ENCODE measurements at regions of chr21 and their contacts with region 1.

Region 1: GRCh38 chr21:39313571-39314142 is at the start of gene BRWD1:
- DNase-seq: peak; percentile 88 to 92 (median 89)
- ATAC-seq: peak; percentile 53 to 86 (median 76)
- H3K4me3 ChIP-seq: peak within 1 kb of the TSS; percentile 68 to 96 (median 82)
- H3K27ac ChIP-seq: peak within 1 kb of the TSS; percentile 92 to 100 (median 98)
- H3K4me1 ChIP-seq: peaks cover 3 to 42% (median 16%) of the 10 kb centered on the region in 12 donors
- H3K27me3 ChIP-seq: no peaks in the 10 kb centered on the region
- CTCF ChIP-seq: peak; percentile 25 to 70 (median 47)
- POLR2A ChIP-seq: peak in 1 of 2 donors; percentile 51
- total RNA-seq, gene BRWD1: 29.0 to 44.5 (median 33.1) TPM

Region 2: DNA sequence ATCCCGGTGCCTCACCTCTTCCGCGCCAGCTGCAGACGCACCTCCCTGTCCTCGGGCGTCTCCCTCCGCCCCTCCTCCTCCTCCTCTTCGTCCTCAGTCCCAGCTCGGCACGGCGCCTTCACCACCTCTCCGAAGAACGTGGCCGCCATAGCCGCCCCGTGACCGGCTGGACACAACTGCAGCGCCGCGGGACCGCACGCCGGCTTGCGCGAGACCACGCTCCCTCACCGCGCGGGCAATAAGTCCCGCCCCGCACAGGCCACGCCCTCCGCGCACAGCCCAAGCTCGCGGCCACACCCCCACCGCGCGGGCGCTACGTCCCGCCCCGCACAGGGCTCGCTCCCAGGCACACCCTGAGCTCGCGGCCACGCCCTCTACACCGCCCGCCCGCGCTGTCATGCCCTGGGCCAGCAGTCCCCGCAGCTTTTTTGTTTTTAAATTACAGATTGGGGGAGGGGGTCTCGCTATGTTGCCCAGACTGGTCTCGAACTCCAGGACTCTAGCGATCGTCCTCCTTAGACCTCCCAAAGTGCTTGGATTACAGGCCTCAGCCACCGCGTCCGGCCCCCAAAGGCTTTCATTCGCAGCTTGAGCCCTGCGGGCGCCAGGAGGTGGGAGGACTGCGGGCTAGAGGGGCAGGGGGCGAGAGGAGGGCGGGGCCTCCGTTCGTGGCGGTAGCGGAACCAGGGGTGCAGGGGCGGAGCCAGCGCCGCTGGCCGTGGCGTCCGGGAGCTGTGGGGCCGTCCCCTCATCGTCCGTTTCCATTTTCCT is 130.2 kb before region 1 on chr21 and contains the start of gene PSMG1:
- intact Hi-C with region 1: no loop called
- DNase-seq: peak; percentile 94 to 97 (median 95)
- ATAC-seq: peak; percentile 97 to 98 (median 98)
- H3K4me3 ChIP-seq: peak within 1 kb of the TSS; percentile 72 to 97 (median 86)
- H3K27ac ChIP-seq: peak within 1 kb of the TSS; percentile 82 to 96 (median 92)
- H3K4me1 ChIP-seq: peaks cover 0 to 24% (median 14%) of the 10 kb centered on the region in 12 donors
- H3K27me3 ChIP-seq: no peaks in the 10 kb centered on the region
- CTCF ChIP-seq: peak in 1 of 12 donors; percentile 14
- POLR2A ChIP-seq: peak in 1 of 2 donors; percentile 72
- total RNA-seq, gene PSMG1: 12.0 to 31.6 (median 25.3) TPM

Region 3: GRCh38 chr21:39349211-39350093 is 35.8 kb after region 1 on chr21:
- intact Hi-C with region 1: loop called (anchors 1 to 2 kb)
- DNase-seq: peak; percentile 96 to 97 (median 97)
- ATAC-seq: peak; percentile 95 to 97 (median 97)
- H3K4me3 ChIP-seq: peak overlapping the region; percentile 62 to 93 (median 80)
- H3K27ac ChIP-seq: peak overlapping the region; percentile 86 to 97 (median 93)
- H3K4me1 ChIP-seq: peaks cover 0 to 39% (median 24%) of the 10 kb centered on the region in 12 donors
- H3K27me3 ChIP-seq: no peaks in the 10 kb centered on the region
- CTCF ChIP-seq: no peak
- POLR2A ChIP-seq: peak in 1 of 2 donors; percentile 33

Region 4: DNA sequence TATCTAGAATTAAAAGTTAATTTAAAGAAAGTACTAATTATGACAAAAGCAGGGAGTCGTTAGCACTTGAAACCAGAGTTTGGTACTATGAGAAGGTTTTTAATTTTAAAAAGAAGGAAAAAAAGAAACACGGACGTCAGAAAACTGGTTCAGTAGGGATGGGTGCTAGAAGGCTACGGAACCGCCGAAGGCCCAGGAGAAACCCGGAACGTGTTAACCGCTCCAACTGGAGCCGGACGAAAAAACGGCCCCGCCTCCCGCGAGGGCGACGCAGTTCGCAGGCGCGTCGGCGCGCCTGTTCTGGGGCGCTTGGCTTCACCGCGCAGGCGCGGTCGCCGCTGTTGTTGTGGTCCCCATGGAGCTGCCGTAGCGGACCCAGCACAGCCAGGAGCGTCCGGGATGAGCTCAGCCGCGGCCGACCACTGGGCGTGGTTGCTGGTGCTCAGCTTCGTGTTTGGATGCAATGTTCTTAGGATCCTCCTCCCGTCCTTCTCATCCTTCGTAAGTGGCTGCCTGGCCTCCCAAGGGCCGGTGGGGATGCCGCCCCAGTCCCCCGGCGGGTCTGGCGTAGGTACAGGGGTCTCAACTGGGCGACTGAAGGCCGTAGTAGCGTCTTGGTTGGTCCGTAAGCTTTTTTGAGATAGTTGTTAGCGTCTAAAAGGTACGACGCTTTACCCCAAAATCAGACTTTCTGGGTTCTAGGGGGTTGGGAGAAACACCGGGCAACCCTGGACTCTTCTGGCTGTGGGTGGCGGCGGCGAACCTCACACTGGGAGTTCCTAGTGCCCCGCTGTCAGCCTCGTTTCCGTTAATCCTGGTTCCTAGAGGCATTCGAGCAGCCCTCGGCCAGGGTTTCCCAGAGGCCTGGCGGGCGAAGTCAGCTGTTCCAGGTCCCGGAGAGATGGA is 66.6 kb after region 1 on chr21:
- intact Hi-C with region 1: loop called in 3 of 10 experiments (anchors 2 to 5 kb)
- DNase-seq: peak; percentile 95 to 99 (median 98)
- ATAC-seq: peak; percentile 96 to 99 (median 99)
- H3K4me3 ChIP-seq: peak overlapping the region; percentile 49 to 99 (median 82)
- H3K27ac ChIP-seq: peak overlapping the region; percentile 79 to 97 (median 88)
- H3K4me1 ChIP-seq: peaks cover 0 to 20% (median 10%) of the 10 kb centered on the region in 12 donors
- H3K27me3 ChIP-seq: peaks cover 0 to 4% (median 0%) of the 10 kb centered on the region in 9 donors
- CTCF ChIP-seq: no peak
- POLR2A ChIP-seq: peak in 1 of 2 donors; percentile 80

Region 5: GRCh38 chr21:39445321-39446269 is 131.9 kb after region 1 on chr21 and contains the start of gene LCA5L:
- intact Hi-C with region 1: loop called in 6 of 10 experiments (anchors 5 to 10 kb)
- DNase-seq: peak; percentile 92 to 97 (median 94)
- ATAC-seq: peak; percentile 82 to 93 (median 92)
- H3K4me3 ChIP-seq: peak within 1 kb of the TSS; percentile 50 to 95 (median 85)
- H3K27ac ChIP-seq: peak within 1 kb of the TSS; percentile 69 to 99 (median 93)
- H3K4me1 ChIP-seq: peaks cover 0 to 26% (median 12%) of the 10 kb centered on the region in 12 donors
- H3K27me3 ChIP-seq: no peaks in the 10 kb centered on the region
- CTCF ChIP-seq: peak in 4 of 12 donors; percentile 9 to 28 (median 18)
- POLR2A ChIP-seq: peak; percentile 38 to 87
- total RNA-seq, gene LCA5L: 0.67 to 1.5 (median 1.0) TPM in 7 of 9 donors, not detected in the others